CD4-positive, alpha-beta memory T cell (primary cell): ENCODE measurements at regions of chr19 and their contacts with region 1.

Region 1: GRCh38 chr19:49590071-49590970 is 661 bp upstream of the PRR12 start:
- DNase-seq: peak; percentile 94 to 96 (median 95)
- H3K4me3 ChIP-seq: peak overlapping the region; percentile 68 to 95
- H3K4me3 Mint-ChIP-seq: peak overlapping the region; percentile 81 to 95 (median 93)
- H3K27ac ChIP-seq: peak overlapping the region; percentile 74
- H3K27ac Mint-ChIP-seq: peak overlapping the region; percentile 84 to 97 (median 94)
- H3K4me1 ChIP-seq: peaks cover 23% of the 10 kb centered on the region
- H3K4me1 Mint-ChIP-seq: peaks cover 21 to 48% (median 31%) of the 10 kb centered on the region in 4 donors
- H3K27me3 ChIP-seq: no peaks in the 10 kb centered on the region
- H3K27me3 Mint-ChIP-seq: no peaks in the 10 kb centered on the region

Region 2: DNA sequence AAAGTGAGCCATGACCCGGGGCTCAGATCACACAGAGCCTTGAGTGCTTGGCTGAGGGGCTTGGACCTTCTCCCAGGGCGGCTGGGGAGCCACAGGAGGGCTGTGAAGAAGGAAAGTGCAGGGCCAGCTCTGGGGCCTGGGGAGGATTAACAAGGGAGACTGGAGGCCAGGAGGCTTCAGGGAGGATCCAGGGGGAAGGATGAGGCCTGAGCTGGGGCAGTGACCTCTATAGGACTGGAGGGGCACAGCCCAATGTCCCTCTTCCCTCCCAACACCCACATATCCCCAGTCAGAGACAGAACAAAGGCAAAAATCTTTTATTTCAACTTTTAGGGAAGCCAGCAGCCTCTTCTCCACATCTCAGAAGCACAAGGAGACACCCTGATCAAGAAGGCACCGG is 144.3 kb before region 1 on chr19:
- CTCF ChIA-PET with region 1: no interaction called
- POLR2A ChIA-PET with region 1: no interaction called
- intact Hi-C with region 1: no loop called
- DNase-seq: no peak
- H3K4me3 ChIP-seq: no peak overlapping the region
- H3K4me3 Mint-ChIP-seq: no peak overlapping the region
- H3K27ac ChIP-seq: no peak overlapping the region
- H3K27ac Mint-ChIP-seq: peak overlapping the region in 4 of 7 donors; percentile 30 to 55 (median 48)
- H3K4me1 ChIP-seq: peaks cover 38% of the 10 kb centered on the region
- H3K4me1 Mint-ChIP-seq: peaks cover 22 to 57% (median 42%) of the 10 kb centered on the region in 4 donors
- H3K27me3 ChIP-seq: peaks cover 11% of the 10 kb centered on the region
- H3K27me3 Mint-ChIP-seq: peaks cover 10 to 17% of the 10 kb centered on the region in 2 donors

Region 3: GRCh38 chr19:49481020-49481683 is 109.2 kb before region 1 on chr19:
- CTCF ChIA-PET with region 1: no interaction called
- POLR2A ChIA-PET with region 1: no interaction called
- intact Hi-C with region 1: no loop called
- DNase-seq: no peak
- H3K4me3 ChIP-seq: no peak overlapping the region
- H3K4me3 Mint-ChIP-seq: peak overlapping the region in 1 of 8 donors; percentile 17
- H3K27ac ChIP-seq: no peak overlapping the region
- H3K27ac Mint-ChIP-seq: peak overlapping the region in 6 of 7 donors; percentile 6 to 90 (median 70)
- H3K4me1 ChIP-seq: peaks cover 33% of the 10 kb centered on the region
- H3K4me1 Mint-ChIP-seq: peaks cover 8 to 29% (median 16%) of the 10 kb centered on the region in 4 donors
- H3K27me3 ChIP-seq: no peaks in the 10 kb centered on the region
- H3K27me3 Mint-ChIP-seq: no peaks in the 10 kb centered on the region

Region 4: DNA sequence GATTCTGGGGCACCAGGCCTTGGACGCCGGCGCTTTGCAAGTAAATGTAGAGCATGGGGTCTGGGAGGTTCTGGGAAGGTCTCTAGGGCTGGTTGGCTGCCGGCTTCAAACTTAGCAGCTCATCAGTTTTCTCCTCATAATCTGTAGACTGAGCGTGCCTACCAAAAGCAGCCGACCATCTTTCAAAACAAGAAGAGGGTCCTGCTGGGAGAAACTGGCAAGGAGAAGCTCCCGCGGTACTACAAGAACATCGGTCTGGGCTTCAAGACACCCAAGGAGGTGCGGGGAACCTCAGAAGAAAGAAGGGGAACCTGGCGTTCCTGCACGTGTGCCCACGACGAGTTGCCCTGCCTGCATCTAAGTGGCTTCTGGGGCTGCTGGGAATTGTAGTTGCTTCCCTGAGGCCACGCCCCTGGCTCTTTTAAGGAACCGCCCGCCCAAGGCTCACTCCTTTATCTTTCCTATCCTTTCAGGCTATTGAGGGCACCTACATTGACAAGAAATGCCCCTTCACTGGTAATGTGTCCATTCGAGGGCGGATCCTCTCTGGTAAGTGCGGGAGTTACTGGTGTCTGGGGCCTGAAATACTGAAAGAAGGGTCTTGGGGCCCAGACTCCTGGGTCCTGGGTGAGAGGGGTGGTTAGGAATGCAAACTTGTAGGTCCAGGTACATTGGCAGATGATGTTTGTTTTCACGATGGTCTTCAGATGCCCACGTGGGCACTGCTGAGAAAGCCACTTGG is 93.1 kb before region 1 on chr19:
- CTCF ChIA-PET with region 1: interaction called, 3 read pairs
- POLR2A ChIA-PET with region 1: interaction called, 11 read pairs
- intact Hi-C with region 1: no loop called
- DNase-seq: peak; percentile 79 to 89 (median 83)
- H3K4me3 ChIP-seq: peak overlapping the region; percentile 92 to 99
- H3K4me3 Mint-ChIP-seq: peak overlapping the region; percentile 99 to 100 (median 100)
- H3K27ac ChIP-seq: peak overlapping the region; percentile 95
- H3K27ac Mint-ChIP-seq: peak overlapping the region; percentile 95 to 100 (median 99)
- H3K4me1 ChIP-seq: peaks cover 55% of the 10 kb centered on the region
- H3K4me1 Mint-ChIP-seq: peaks cover 23 to 87% (median 43%) of the 10 kb centered on the region in 4 donors
- H3K27me3 ChIP-seq: no peaks in the 10 kb centered on the region
- H3K27me3 Mint-ChIP-seq: no peaks in the 10 kb centered on the region

Region 5: DNA sequence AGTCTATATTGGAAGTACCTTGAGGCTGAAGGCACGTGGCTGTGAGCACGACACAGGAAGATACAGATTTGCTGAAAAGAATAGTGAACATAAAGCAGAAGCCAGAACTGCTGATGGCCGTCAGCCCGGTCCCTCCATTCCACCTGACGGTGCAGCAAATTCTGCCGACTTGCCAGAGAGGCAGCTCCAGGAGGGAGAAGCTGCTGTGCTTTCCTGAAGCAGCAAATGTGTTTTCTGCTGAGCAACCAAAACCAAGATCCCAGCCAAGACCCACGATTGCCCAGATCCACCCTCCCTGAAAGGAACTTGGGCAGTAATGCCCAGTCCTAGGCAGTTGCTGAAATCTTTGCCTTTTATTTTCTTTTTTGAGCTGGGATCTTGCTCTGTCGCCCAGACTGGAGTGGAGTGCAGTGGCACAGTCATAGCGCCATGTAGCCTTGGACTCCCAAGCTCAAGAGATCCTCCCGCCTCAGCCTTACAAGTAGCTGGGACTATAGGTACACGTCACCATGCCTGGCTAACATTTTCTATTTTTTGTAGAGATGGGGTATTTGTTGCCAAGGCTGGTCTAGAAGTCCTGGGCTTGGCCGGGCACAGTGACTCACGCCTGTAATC is 69.5 kb before region 1 on chr19:
- CTCF ChIA-PET with region 1: no interaction called
- POLR2A ChIA-PET with region 1: no interaction called
- intact Hi-C with region 1: no loop called
- DNase-seq: no peak
- H3K4me3 ChIP-seq: no peak overlapping the region
- H3K4me3 Mint-ChIP-seq: no peak overlapping the region
- H3K27ac ChIP-seq: no peak overlapping the region
- H3K27ac Mint-ChIP-seq: no peak overlapping the region
- H3K4me1 ChIP-seq: no peaks in the 10 kb centered on the region
- H3K4me1 Mint-ChIP-seq: peaks cover 0 to 6% (median 3%) of the 10 kb centered on the region in 4 donors
- H3K27me3 ChIP-seq: no peaks in the 10 kb centered on the region
- H3K27me3 Mint-ChIP-seq: no peaks in the 10 kb centered on the region

Region 6: DNA sequence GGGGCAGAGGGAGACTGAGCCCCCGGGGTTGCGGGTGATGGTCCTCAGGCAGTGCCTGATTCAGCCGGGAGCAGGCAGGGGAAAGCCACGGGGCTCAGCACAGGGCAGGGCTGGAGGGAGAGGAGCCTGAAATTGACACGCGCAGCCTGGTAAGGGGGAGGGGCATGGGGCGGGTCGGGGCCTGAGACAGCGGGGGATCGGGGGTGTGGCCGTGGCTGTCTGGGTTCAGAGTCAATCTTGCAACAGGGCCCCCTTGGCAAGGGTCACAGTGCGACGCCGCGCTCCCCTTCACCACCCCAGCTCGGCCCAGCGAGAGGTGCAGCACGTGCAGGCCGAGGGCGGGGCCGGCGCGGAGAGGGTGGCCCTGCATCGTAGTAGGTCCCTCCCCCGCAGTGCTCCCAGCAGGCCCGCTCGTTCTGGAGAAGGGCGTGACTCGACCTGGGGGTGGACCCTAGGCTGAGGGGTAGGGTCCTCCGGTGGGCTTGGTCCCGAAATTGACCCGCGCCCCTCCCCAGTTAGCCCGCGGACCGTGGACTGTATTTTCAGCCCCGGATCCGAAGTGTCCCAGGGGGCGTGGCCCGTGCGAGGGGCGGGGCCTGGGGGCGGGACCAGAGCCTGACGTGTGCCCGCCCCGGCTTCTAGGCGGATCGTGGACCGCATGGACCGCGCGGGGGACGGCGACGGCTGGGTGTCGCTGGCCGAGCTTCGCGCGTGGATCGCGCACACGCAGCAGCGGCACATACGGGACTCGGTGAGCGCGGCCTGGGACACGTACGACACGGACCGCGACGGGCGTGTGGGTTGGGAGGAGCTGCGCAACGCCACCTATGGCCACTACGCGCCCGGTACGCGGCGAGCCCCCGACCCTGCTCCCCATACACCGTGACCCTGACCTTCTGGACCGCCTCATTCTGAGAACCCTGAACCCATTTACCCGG is 56.5 kb before region 1 on chr19:
- CTCF ChIA-PET with region 1: no interaction called
- POLR2A ChIA-PET with region 1: no interaction called
- intact Hi-C with region 1: no loop called
- DNase-seq: peak; percentile 84 to 91 (median 87)
- H3K4me3 ChIP-seq: peak overlapping the region; percentile 61 to 70
- H3K4me3 Mint-ChIP-seq: peak overlapping the region; percentile 78 to 90 (median 88)
- H3K27ac ChIP-seq: peak overlapping the region; percentile 50
- H3K27ac Mint-ChIP-seq: peak overlapping the region; percentile 17 to 92 (median 83)
- H3K4me1 ChIP-seq: peaks cover 23% of the 10 kb centered on the region
- H3K4me1 Mint-ChIP-seq: peaks cover 16 to 35% (median 22%) of the 10 kb centered on the region in 4 donors
- H3K27me3 ChIP-seq: no peaks in the 10 kb centered on the region
- H3K27me3 Mint-ChIP-seq: no peaks in the 10 kb centered on the region

Region 7: DNA sequence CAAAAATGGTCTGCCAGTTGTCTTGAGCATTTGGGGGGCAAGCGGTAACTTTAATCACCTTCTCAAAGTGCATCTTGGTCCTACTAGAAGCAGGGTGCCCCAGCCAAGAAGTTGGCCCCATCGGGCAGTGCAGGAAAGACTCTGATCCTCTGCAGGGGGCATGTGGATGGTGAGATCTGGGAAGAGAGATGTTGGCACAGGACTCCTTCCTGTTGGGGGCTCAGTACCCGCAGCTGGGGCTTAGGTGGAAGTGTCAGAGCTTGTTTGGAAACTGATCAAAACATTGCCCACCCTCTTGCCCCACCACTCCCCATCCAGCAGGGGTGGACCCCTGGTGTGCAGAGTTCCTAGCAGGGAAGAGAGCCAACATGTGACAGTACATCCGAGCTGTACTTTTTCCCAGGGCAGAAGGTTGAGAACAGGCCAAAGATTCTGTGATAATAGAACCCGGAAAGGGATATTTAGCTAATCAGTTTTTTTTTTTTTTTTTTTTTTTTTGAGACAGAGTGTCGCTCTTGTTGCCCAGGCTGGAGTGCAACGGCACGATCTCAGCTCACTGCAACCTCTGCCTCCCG is 40.8 kb after region 1 on chr19:
- CTCF ChIA-PET with region 1: no interaction called
- POLR2A ChIA-PET with region 1: interaction called, 15 read pairs
- intact Hi-C with region 1: no loop called
- DNase-seq: no peak
- H3K4me3 ChIP-seq: no peak overlapping the region
- H3K4me3 Mint-ChIP-seq: no peak overlapping the region
- H3K27ac ChIP-seq: no peak overlapping the region
- H3K27ac Mint-ChIP-seq: peak overlapping the region in 4 of 7 donors; percentile 2 to 78 (median 32)
- H3K4me1 ChIP-seq: no peaks in the 10 kb centered on the region
- H3K4me1 Mint-ChIP-seq: peaks cover 2 to 9% (median 4%) of the 10 kb centered on the region in 4 donors
- H3K27me3 ChIP-seq: no peaks in the 10 kb centered on the region
- H3K27me3 Mint-ChIP-seq: no peaks in the 10 kb centered on the region